Activated CD4-positive, alpha-beta T cell treated with anti-CD3 and anti-CD28 coated beads, Interleukin-2, amount 10 ng/mL, durations not matched to agents 7 days and 5 days (primary cell): ENCODE measurements at regions of chr1 and their contacts with region 1.

Region 1: DNA sequence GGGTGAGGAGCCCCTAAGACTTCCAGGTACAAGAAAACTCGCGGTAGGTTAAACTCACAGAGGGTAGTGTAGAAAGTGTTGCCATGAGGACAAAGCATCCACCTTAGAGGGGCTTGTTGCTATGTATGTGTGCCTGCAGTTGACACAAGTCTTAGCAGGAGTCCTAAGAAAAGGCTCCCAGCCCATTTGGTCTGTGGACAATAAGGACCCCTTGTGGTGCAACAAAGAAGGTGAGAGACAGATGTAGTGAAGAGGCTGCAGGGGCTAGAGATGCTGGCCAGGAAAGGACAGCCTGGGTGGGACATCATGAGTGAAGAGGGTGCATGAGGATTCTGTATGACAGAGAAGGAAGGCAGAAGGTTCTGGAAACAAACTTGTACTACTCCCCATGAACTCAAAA is 36.3 kb upstream of the IL10 start:
- DNase-seq: peak; percentile 74
- H3K4me3 Mint-ChIP-seq: no peak overlapping the region
- H3K27ac Mint-ChIP-seq: no peak overlapping the region
- H3K4me1 Mint-ChIP-seq: peaks cover 54% of the 10 kb centered on the region
- H3K27me3 Mint-ChIP-seq: peaks cover 2% of the 10 kb centered on the region

Region 2: GRCh38 chr1:206725109-206725963 is 83.3 kb before region 1 on chr1:
- CTCF ChIA-PET with region 1: interaction called, 33 read pairs
- POLR2A ChIA-PET with region 1: no interaction called
- DNase-seq: peak; percentile 76
- H3K4me3 Mint-ChIP-seq: no peak overlapping the region
- H3K27ac Mint-ChIP-seq: peak overlapping the region; percentile 7
- H3K4me1 Mint-ChIP-seq: peaks cover 51% of the 10 kb centered on the region
- H3K27me3 Mint-ChIP-seq: no peaks in the 10 kb centered on the region

Region 3: GRCh38 chr1:206797534-206798383 is 10.9 kb before region 1 on chr1:
- CTCF ChIA-PET with region 1: interaction called, 13 read pairs
- POLR2A ChIA-PET with region 1: no interaction called
- DNase-seq: no peak
- H3K4me3 Mint-ChIP-seq: no peak overlapping the region
- H3K27ac Mint-ChIP-seq: no peak overlapping the region
- H3K4me1 Mint-ChIP-seq: peaks cover 38% of the 10 kb centered on the region
- H3K27me3 Mint-ChIP-seq: peaks cover 35% of the 10 kb centered on the region